Common myeloid progenitor, CD34-positive (primary cell): ENCODE measurements at regions of chr17 and their contacts with region 1.

Region 1: DNA sequence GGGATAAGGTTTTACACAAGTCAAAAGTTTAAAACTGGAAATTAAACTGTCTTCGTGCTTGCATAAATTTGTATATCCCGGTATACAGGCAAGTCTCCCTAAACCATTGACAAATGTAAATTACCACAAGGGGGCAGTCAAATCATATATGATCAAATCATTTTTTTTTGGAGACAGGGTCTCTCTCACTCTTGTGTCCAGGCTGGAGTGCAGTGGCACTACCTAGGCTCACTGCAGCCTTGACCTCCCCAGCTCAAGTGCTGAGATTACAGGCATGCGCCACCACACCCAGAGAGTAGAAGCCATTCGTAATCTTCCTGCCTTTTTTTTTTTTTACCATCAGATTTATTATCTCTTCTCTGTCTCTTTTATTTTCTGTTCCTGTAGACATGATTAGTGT is 18.5 kb downstream of the TOP2A start:
- DNase-seq: peak; percentile 65 to 77 (median 75)
- H3K4me3 ChIP-seq: no peak overlapping the region
- H3K27ac ChIP-seq: no peak overlapping the region
- H3K4me1 ChIP-seq: no peaks in the 10 kb centered on the region
- H3K27me3 ChIP-seq: no peaks in the 10 kb centered on the region

Region 2: GRCh38 chr17:40251576-40251975 is 147.6 kb before region 1 on chr17:
- CTCF ChIA-PET with region 1: no interaction called
- POLR2A ChIA-PET with region 1: no interaction called
- DNase-seq: no peak
- H3K4me3 ChIP-seq: no peak overlapping the region
- H3K27ac ChIP-seq: no peak overlapping the region
- H3K4me1 ChIP-seq: no peaks in the 10 kb centered on the region
- H3K27me3 ChIP-seq: no peaks in the 10 kb centered on the region

Region 3: GRCh38 chr17:40417609-40418427 is 18.6 kb after region 1 on chr17 and contains the start of gene TOP2A:
- CTCF ChIA-PET with region 1: interaction called, 51 read pairs
- POLR2A ChIA-PET with region 1: no interaction called
- DNase-seq: peak; percentile 99 to 100 (median 99)
- H3K4me3 ChIP-seq: peak within 1 kb of the TSS; percentile 85 to 100 (median 94)
- H3K27ac ChIP-seq: peak within 1 kb of the TSS in 1 of 2 experiments; percentile 76
- H3K4me1 ChIP-seq: peaks cover 12 to 42% (median 30%) of the 10 kb centered on the region in 4 experiments
- H3K27me3 ChIP-seq: no peaks in the 10 kb centered on the region